ENCODE measurements at regions of chr12 and their contacts with region 1.

Region 1: DNA sequence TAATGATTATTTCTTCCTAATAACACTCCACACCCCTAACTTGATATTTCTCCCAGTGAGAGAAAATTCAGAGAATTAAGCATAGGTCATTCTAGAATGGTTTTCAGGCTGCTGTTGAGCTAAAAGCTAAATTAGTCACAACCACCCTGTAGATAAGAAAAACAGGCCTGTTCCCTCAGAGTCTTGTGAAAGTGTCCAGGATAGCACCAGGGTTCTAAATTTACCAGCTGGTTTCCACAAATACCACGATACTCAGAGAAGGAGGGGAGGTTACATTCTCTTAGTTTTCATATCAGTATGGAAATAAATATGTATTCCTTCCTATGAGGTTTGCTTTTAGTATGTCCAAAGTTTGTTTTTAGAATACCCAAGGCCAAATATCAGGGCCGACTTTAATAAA is 66.0 kb upstream of the YARS2 start:
- DNase-seq: no peak
- ATAC-seq: peak; percentile 87

Region 2: GRCh38 chr12:32877601-32878459 is 56.1 kb after region 1 on chr12:
- intact Hi-C with region 1: loop called in 1 of 2 experiments (anchors 10 kb)
- DNase-seq: peak; percentile 77
- ATAC-seq: peak; percentile 93 to 94

Measured in left cardiac atrium (tissue), 4 donors.